ENCODE measurements at regions of chr2 and their contacts with region 1.

Region 1: GRCh38 chr2:97806738-97807618 is 93.6 kb downstream of the ZAP70 start:
- DNase-seq: peak; percentile 45
- ATAC-seq: peak; percentile 98
- H3K4me3 ChIP-seq: no peak overlapping the region
- H3K27ac ChIP-seq: no peak overlapping the region
- H3K4me1 ChIP-seq: peaks cover 0 to 9% of the 10 kb centered on the region in 2 experiments; a peak in 1 of 4 replicates
- H3K27me3 ChIP-seq: no peaks in the 10 kb centered on the region
- CTCF ChIP-seq: peak; percentile 75 to 91 (median 88)
- POLR2A ChIP-seq: no peak
- RAD21 ChIP-seq: peak; percentile 96

Region 2: GRCh38 chr2:97966518-97967215 is 159.7 kb after region 1 on chr2:
- CTCF ChIA-PET with region 1: no interaction called
- POLR2A ChIA-PET with region 1: no interaction called
- RAD21 ChIA-PET with region 1: no interaction called
- intact Hi-C with region 1: no loop called
- DNase-seq: peak; percentile 43
- ATAC-seq: peak; percentile 73
- H3K4me3 ChIP-seq: no peak overlapping the region
- H3K27ac ChIP-seq: no peak overlapping the region
- H3K4me1 ChIP-seq: peaks cover 8 to 17% of the 10 kb centered on the region in 2 experiments; a peak in 3 of 4 replicates
- H3K27me3 ChIP-seq: no peaks in the 10 kb centered on the region
- CTCF ChIP-seq: no peak
- POLR2A ChIP-seq: no peak
- RAD21 ChIP-seq: no peak

Region 3: GRCh38 chr2:97995734-97996624 is 189.0 kb after region 1 on chr2 and contains the start of gene TMEM131:
- CTCF ChIA-PET with region 1: no interaction called
- POLR2A ChIA-PET with region 1: no interaction called
- RAD21 ChIA-PET with region 1: no interaction called
- intact Hi-C with region 1: loop called (anchors 2 kb)
- DNase-seq: peak; percentile 89
- ATAC-seq: peak; percentile 90
- H3K4me3 ChIP-seq: peak within 1 kb of the TSS; percentile 73 to 90
- H3K27ac ChIP-seq: peak within 1 kb of the TSS; percentile 97
- H3K4me1 ChIP-seq: peaks cover 7 to 40% of the 10 kb centered on the region in 2 experiments; a peak in 3 of 4 replicates
- H3K27me3 ChIP-seq: no peaks in the 10 kb centered on the region
- CTCF ChIP-seq: no peak
- POLR2A ChIP-seq: peak; percentile 24
- RAD21 ChIP-seq: no peak
- total RNA-seq, gene TMEM131: 51.5 TPM

Region 4: GRCh38 chr2:98086491-98087446 is 279.8 kb after region 1 on chr2 and contains the start of gene VWA3B:
- CTCF ChIA-PET with region 1: interaction called, 3 read pairs
- POLR2A ChIA-PET with region 1: no interaction called
- RAD21 ChIA-PET with region 1: no interaction called
- intact Hi-C with region 1: loop called (anchors 5 kb)
- DNase-seq: peak; percentile 46
- ATAC-seq: peak; percentile 96
- H3K4me3 ChIP-seq: peak within 1 kb of the TSS; percentile 62 to 67
- H3K27ac ChIP-seq: no peak within 1 kb of the TSS
- H3K4me1 ChIP-seq: peaks cover 6 to 23% of the 10 kb centered on the region in 2 experiments; a peak in 3 of 4 replicates
- H3K27me3 ChIP-seq: no peaks in the 10 kb centered on the region
- CTCF ChIP-seq: no peak
- POLR2A ChIP-seq: no peak
- RAD21 ChIP-seq: 0 out of 2 replicates have a peak, but pooled peaks have one; percentile 4
- total RNA-seq, gene VWA3B: 0.47 TPM

Region 5: DNA sequence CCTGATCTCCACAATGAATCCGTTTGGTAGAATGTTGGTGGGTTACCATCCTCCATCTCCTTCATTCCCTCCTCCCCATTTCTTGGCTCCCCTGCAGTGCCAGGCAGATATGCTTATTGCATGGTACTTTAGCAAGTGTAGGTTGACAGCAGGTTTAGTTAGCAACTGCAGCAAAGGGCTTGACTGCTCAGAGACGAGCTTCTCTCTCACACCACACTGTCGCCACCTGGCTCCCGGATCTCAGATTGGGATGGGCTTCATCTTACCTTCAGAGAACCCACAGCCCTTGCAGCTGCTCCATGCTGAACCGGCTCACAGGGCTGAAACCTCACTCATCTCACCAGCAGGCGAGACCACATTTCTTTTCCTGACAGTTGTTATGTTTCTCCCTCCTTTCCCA is 368.8 kb after region 1 on chr2:
- CTCF ChIA-PET with region 1: no interaction called
- POLR2A ChIA-PET with region 1: no interaction called
- RAD21 ChIA-PET with region 1: no interaction called
- intact Hi-C with region 1: loop called (anchors 5 kb)
- DNase-seq: peak; percentile 10
- ATAC-seq: peak; percentile 75
- H3K4me3 ChIP-seq: no peak overlapping the region
- H3K27ac ChIP-seq: no peak overlapping the region
- H3K4me1 ChIP-seq: peaks cover 0 to 6% of the 10 kb centered on the region in 2 experiments; a peak in 1 of 4 replicates
- H3K27me3 ChIP-seq: peaks cover 20% of the 10 kb centered on the region
- CTCF ChIP-seq: peak; percentile 20 to 26 (median 22); a peak in 3 of 6 replicates
- POLR2A ChIP-seq: no peak
- RAD21 ChIP-seq: peak; percentile 72

Region 6: GRCh38 chr2:98269274-98269673 is 462.3 kb after region 1 on chr2:
- CTCF ChIA-PET with region 1: interaction called, 10 read pairs
- POLR2A ChIA-PET with region 1: no interaction called
- RAD21 ChIA-PET with region 1: interaction called in 1 of 2 experiments, 3 read pairs
- intact Hi-C with region 1: loop called (anchors 1 kb)
- DNase-seq: peak; percentile 64
- ATAC-seq: peak; percentile 91
- H3K4me3 ChIP-seq: no peak overlapping the region
- H3K27ac ChIP-seq: no peak overlapping the region
- H3K4me1 ChIP-seq: no peaks in the 10 kb centered on the region
- H3K27me3 ChIP-seq: no peaks in the 10 kb centered on the region
- CTCF ChIP-seq: peak; percentile 71 to 76 (median 75)
- POLR2A ChIP-seq: no peak
- RAD21 ChIP-seq: peak; percentile 77

Measured in HCT116 (cell line).